ENCODE measurements at regions of chr22 and their contacts with region 1.

Region 1: DNA sequence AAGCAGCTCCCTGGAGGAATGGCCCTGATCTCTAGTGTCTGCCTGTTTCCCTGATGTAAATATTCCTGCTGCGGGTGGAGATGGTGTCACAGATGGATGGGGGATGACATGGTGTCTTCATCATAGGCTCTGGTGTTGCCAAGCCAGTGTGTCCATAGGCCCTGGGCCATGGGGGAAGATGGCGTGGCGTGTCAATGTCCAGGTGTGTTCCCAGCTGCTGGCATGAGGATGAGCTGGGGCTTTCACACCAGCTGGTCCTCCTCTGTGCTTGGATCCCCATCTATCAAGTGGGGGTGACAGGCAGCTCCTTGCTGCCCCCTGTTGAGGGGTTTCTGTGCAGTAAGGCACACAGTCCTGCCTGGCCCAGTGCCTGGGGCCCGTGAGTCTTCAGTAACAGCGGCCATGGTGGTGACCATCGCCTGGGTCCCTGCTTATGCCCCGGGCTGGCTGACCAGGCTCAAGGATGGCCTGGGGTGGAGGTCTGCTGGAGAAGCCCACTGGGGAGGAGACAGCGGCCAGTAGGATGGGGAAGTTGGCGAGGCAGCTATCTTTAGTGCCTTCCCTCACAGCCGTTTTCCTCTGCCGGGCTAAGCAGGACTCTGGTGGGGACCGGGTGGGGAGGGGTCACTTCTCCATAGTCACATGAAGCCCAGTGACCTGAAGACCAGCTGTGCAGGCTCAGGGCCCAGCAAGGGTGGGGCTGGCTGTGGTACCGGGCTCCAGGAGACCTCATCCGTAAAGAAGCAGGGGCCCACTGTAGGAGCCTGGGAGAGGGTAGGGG is 12.7 kb downstream of the RPL3 start:
- DNase-seq: peak; percentile 78
- ATAC-seq: peak; percentile 1; the same call in 1 of the 2 replicates
- H3K4me3 Mint-ChIP-seq: no peak overlapping the region
- H3K27ac Mint-ChIP-seq: peak overlapping the region; percentile 55
- H3K4me1 Mint-ChIP-seq: peaks cover 25% of the 10 kb centered on the region
- H3K27me3 Mint-ChIP-seq: no peaks in the 10 kb centered on the region
- CTCF ChIP-seq: no peak

Region 2: DNA sequence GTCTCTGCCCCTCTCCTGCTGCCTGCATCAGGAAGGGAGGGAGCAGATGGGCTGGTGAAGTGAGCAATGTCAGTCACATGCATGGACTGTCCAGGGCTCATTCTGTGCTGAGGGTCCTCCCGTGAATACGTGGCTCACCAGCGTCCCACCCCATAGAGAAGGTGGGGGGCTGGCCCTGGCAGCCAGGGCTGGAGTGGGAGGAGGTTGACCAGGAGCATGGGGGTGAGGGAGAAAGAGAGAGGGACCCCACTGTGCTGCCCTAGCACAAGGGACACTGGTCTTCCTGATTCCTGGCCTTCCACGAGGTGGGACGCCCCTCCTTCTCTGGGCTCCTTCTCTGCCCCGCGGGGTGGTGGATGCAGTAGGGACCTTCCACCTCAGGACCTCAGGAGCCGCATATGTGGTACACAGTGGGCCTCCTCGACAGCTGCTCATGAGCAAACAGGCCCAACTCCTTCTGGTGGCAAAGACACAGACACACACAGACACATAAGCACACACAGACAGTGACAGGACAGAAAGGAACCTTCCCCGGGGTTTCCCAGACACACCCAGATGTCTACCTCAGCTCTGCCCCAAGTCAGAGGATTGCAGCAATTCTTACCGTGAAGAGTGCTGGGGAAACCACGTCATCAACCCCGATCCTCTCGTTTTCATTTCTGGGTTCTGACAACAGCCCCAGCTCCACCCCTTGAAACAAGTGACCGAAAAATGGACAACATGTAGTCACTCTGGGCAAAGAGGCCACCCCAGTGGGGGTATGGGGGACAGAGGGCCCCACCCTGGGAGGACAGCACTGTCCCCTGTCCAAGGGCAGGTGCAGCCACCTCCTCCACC is 353.0 kb before region 1 on chr22:
- CTCF ChIA-PET with region 1: no interaction called
- POLR2A ChIA-PET with region 1: no interaction called
- DNase-seq: no peak
- ATAC-seq: no peak
- H3K4me3 Mint-ChIP-seq: no peak overlapping the region
- H3K27ac Mint-ChIP-seq: no peak overlapping the region
- H3K4me1 Mint-ChIP-seq: peaks cover 3% of the 10 kb centered on the region; the same call in 1 of the 2 replicates
- H3K27me3 Mint-ChIP-seq: peaks cover 1% of the 10 kb centered on the region
- CTCF ChIP-seq: no peak

Region 3: GRCh38 chr22:39170825-39171622 is 135.7 kb before region 1 on chr22:
- CTCF ChIA-PET with region 1: interaction called, 66 read pairs
- POLR2A ChIA-PET with region 1: interaction called, 14 read pairs
- DNase-seq: peak; percentile 91
- ATAC-seq: peak; percentile 43
- H3K4me3 Mint-ChIP-seq: no peak overlapping the region
- H3K27ac Mint-ChIP-seq: peak overlapping the region; percentile 92
- H3K4me1 Mint-ChIP-seq: peaks cover 63% of the 10 kb centered on the region
- H3K27me3 Mint-ChIP-seq: no peaks in the 10 kb centered on the region
- CTCF ChIP-seq: peak; percentile 97

Region 4: DNA sequence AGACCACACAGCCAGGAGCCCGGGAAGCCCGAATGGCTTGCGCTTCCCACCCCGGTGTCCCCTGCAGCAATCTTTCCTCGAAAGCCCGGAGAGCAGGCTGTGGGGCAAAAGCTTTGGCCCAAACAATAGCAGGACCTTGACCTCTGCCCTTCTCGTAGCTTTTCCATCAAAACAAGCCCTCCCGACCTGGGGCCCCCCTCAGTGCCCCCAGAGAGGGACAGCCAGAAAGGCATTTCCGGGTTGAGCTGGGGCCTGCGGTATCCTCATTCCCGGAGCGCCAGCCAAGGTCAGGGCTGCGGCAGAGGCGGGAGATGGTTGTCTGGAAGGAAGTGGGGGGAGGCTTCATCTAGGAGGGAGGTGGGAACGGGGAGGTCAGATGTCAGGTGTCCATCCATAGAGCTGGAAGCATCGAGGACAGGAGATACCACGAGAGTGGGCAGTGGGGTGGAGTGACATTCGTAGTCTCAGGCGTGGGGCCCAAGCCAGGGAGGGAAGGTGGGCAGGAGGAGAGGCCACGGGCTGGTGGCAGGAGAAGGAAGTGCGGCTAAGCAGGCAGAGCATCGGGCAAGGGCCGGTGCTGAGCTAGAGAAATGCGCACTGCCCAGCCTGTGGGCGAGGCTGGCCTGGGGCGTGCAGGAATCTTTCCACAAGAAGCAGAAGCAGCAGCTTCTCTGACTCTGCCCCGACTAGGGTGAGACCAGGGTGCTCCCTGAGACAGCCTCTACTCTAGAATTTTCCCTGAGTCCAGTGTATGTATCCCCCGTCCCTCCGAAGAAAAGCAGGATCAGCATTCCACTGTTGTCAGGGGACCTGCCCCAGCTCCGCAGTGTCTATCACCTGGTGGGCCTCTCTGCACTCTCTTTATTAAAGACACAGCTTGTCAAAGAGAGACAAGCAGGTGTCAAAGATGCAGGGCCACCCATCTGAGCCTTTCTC is 76.2 kb before region 1 on chr22:
- CTCF ChIA-PET with region 1: interaction called, 30 read pairs
- POLR2A ChIA-PET with region 1: interaction called, 6 read pairs
- DNase-seq: peak; percentile 79
- ATAC-seq: peak; percentile 72
- H3K4me3 Mint-ChIP-seq: peak overlapping the region; percentile 50
- H3K27ac Mint-ChIP-seq: peak overlapping the region; percentile 92
- H3K4me1 Mint-ChIP-seq: peaks cover 54% of the 10 kb centered on the region
- H3K27me3 Mint-ChIP-seq: peaks cover 22% of the 10 kb centered on the region
- CTCF ChIP-seq: no peak

Region 5: GRCh38 chr22:39279170-39279850 is 27.5 kb before region 1 on chr22:
- CTCF ChIA-PET with region 1: interaction called, 12 read pairs
- POLR2A ChIA-PET with region 1: no interaction called
- DNase-seq: no peak
- ATAC-seq: peak; percentile 28
- H3K4me3 Mint-ChIP-seq: no peak overlapping the region
- H3K27ac Mint-ChIP-seq: peak overlapping the region; percentile 61
- H3K4me1 Mint-ChIP-seq: peaks cover 31% of the 10 kb centered on the region
- H3K27me3 Mint-ChIP-seq: peaks cover 6% of the 10 kb centered on the region
- CTCF ChIP-seq: no peak

Region 6: GRCh38 chr22:39332441-39333064 is 25.8 kb after region 1 on chr22:
- CTCF ChIA-PET with region 1: interaction called, 26 read pairs
- POLR2A ChIA-PET with region 1: no interaction called
- DNase-seq: no peak
- ATAC-seq: no peak
- H3K4me3 Mint-ChIP-seq: no peak overlapping the region
- H3K27ac Mint-ChIP-seq: no peak overlapping the region
- H3K4me1 Mint-ChIP-seq: no peaks in the 10 kb centered on the region
- H3K27me3 Mint-ChIP-seq: no peaks in the 10 kb centered on the region; the same call in 1 of the 2 replicates
- CTCF ChIP-seq: no peak

Region 7: DNA sequence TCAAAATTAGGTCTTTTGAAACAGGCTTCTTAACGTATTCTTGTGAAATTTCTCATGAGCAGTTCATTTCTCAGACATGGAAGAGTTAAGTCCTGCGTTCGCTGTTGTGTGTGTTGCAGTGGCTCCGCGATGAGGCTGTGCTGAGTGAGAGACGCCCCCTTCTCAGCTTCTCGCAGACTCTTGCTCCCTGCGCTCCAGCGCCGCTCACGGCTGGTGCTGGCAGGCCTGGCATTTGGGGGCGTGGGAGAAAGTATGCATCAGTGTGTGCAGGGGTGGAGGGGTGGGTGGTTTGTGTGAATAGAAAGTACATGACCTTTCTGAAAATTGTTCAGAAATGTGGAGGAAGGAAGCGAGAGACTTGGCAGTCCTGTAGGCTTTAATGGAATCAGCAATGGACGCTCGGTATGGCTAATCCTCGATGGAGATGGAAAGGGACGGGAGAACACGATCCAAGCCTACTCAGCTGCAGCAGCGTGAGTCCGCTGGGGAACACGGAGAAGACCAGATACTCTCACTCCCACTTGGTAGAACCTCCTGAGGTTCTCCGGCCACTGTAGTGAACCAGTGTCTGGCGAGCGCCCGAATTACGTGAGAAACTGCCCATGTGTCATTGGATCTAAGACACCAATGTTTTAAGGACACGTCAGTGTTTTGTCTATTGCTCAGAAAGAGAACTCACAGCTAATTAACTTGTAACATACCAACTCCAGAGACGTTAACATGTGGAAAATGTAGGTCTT is 98.7 kb after region 1 on chr22:
- CTCF ChIA-PET with region 1: no interaction called
- POLR2A ChIA-PET with region 1: no interaction called
- DNase-seq: no peak
- ATAC-seq: no peak
- H3K4me3 Mint-ChIP-seq: no peak overlapping the region
- H3K27ac Mint-ChIP-seq: peak overlapping the region; percentile 43; the same call in 1 of the 2 replicates
- H3K4me1 Mint-ChIP-seq: peaks cover 6% of the 10 kb centered on the region
- H3K27me3 Mint-ChIP-seq: no peaks in the 10 kb centered on the region
- CTCF ChIP-seq: no peak